Left cardiac atrium (tissue), 4 donors: ENCODE measurements at regions of chr15 and their contacts with region 1.

Region 1: DNA sequence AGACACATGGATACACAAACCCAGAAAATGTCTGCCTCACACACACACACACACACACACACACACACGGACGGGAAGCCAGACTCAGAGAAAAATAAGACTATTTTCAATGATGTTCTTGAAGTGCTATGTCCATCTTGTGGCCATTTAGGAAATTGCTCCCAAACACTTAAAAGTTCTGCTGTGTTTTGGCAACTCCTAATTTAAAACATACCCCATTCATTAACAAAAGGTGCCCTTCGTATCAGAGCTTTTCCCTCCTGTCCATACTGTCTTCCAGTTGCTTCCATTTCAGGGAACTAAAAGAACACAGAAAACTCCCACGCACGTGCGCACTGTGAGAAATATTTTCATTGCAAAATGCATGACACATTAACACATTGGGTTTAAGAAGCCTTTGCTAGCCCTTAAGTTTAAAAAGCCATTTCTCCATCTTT is 44.6 kb downstream of the SLC12A1 start:
- DNase-seq: peak; percentile 60
- ATAC-seq: peak in 1 of 2 donors; percentile 45

Region 2: DNA sequence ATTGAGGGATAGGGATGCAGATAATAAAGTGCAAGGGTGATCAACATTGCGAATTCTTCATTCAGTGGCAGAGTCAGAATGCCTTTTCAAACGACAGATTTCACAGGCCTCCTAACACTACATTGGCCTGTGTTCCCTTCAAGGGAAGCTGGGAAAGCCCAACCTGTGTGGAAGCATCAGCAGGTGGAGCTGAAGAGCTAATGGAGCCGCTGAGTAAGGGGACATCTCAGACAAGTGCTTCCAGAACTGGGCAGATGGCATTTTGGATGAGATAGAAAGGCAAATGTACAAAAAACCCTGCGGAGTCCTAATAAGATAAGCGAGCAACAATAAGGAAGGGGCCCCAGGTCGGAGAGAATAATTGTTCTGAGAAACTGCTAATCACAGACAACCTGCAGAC is 138.4 kb before region 1 on chr15:
- intact Hi-C with region 1: loop called in 1 of 2 experiments (anchors 5 kb)
- DNase-seq: no peak
- ATAC-seq: peak in 1 of 2 donors; percentile 45

Region 3: DNA sequence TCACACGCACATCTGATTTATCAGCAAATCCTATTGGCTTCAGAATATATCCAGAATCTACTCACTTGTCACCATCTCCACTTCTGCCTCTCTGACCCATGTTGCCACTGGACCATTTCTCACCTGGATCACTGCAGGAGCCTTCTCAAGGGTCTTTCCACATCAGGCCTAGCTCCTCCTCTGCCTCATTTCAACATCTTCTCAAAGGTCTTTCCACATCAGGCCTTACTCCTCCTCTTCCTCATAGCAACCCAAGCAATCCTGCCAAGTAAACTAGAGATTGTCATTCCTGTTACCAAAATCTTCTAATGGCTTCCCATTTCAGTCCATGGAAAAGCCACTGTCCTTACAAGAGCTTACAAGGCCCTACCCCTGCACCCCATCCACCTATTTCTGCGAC is 62.6 kb after region 1 on chr15:
- intact Hi-C with region 1: no loop called
- DNase-seq: no peak
- ATAC-seq: no peak